Left lung (tissue), 14 donors: ENCODE measurements at regions of chr1 and their contacts with region 1.

Region 1: GRCh38 chr1:156860113-156860627 is 495 bp upstream of the NTRK1 start:
- DNase-seq: peak in 1 of 4 donors; percentile 39
- ATAC-seq: peak; percentile 86
- H3K4me3 ChIP-seq: peak overlapping the region; percentile 5 to 12
- H3K27ac ChIP-seq: no peak overlapping the region
- H3K4me1 ChIP-seq: peaks cover 15 to 24% of the 10 kb centered on the region in 2 donors
- H3K27me3 ChIP-seq: peaks cover 48 to 90% of the 10 kb centered on the region in 2 donors
- CTCF ChIP-seq: peak; percentile 63 to 67

Region 2: GRCh38 chr1:156797212-156797871 is 62.8 kb before region 1 on chr1:
- intact Hi-C with region 1: loop called in 1 of 2 experiments (anchors 5 kb)
- DNase-seq: peak in 1 of 4 donors; percentile 42
- ATAC-seq: peak; percentile 82
- H3K4me3 ChIP-seq: no peak overlapping the region
- H3K27ac ChIP-seq: no peak overlapping the region
- H3K4me1 ChIP-seq: no peaks in the 10 kb centered on the region
- H3K27me3 ChIP-seq: no peaks in the 10 kb centered on the region
- CTCF ChIP-seq: peak; percentile 62 to 67

Region 3: DNA sequence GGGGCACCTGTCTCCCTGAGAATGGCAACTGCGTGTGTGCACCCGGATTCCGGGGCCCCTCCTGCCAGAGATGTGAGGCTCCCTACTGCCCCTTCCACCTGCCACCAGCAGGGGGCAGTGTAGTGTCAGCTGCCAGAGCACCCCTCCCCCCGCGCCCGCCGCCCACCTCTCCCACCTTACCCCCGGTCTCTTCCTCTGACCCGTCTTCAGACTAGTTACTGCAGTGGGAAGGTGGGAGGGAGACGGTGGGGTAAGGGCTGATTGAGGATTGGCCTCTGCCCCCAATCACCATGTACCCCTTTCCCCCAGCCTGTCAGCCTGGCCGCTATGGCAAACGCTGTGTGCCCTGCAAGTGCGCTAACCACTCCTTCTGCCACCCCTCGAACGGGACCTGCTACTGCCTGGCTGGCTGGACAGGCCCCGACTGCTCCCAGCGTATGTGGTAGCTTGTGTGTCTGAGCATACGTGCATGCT is 50.2 kb after region 1 on chr1:
- intact Hi-C with region 1: no loop called
- DNase-seq: peak in 1 of 4 donors; percentile 85
- ATAC-seq: peak; percentile 56
- H3K4me3 ChIP-seq: no peak overlapping the region
- H3K27ac ChIP-seq: no peak overlapping the region
- H3K4me1 ChIP-seq: peaks cover 4 to 11% of the 10 kb centered on the region in 2 donors
- H3K27me3 ChIP-seq: peaks cover 0 to 28% of the 10 kb centered on the region in 2 donors
- CTCF ChIP-seq: peak; percentile 65 to 88